Panc1 (cell line): ENCODE measurements at regions of chr12 and their contacts with region 1.

Region 1: DNA sequence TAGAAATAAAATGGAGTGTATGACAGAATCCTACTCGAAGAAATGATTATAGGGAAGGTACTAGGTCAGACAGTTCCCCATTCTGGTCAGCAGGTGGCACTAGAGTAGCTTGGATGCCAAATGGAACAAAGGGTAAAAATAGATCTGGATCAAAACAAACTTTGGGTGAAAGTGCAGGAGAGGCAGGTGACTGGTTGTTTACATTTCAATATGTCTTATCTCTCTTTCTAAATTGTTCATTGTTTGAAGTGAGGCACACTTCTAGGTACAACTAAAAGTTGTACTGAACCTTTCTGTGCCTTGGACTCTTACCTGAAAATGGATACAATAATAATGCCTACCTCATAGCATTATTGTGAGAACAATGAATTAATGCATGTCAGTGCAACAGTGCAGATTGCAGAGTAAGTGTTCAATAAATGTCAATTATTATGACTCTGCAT is 62.0 kb upstream of the OSBPL8 start:
- DNase-seq: no peak
- ATAC-seq: peak; percentile 88
- H3K4me3 ChIP-seq: no peak overlapping the region
- H3K27ac ChIP-seq: no peak overlapping the region
- H3K4me1 ChIP-seq: no peaks in the 10 kb centered on the region
- H3K27me3 ChIP-seq: 0 out of 2 replicates have a peak, but pooled peaks cover 3% of the 10 kb centered on the region
- CTCF ChIP-seq: peak; percentile 81; the same call in 1 of the 2 replicates

Region 2: GRCh38 chr12:76790564-76791552 is 169.3 kb after region 1 on chr12:
- CTCF ChIA-PET with region 1: interaction called, 5 read pairs
- POLR2A ChIA-PET with region 1: no interaction called
- in situ Hi-C with region 1: no loop called
- intact Hi-C with region 1: loop called (anchors 1 kb)
- DNase-seq: no peak
- ATAC-seq: peak; percentile 45; the same call in 1 of the 2 replicates
- H3K4me3 ChIP-seq: no peak overlapping the region
- H3K27ac ChIP-seq: no peak overlapping the region
- H3K4me1 ChIP-seq: 0 out of 2 replicates have a peak, but pooled peaks cover 5% of the 10 kb centered on the region
- H3K27me3 ChIP-seq: no peaks in the 10 kb centered on the region
- CTCF ChIP-seq: peak; percentile 51; the same call in 1 of the 2 replicates

Region 3: DNA sequence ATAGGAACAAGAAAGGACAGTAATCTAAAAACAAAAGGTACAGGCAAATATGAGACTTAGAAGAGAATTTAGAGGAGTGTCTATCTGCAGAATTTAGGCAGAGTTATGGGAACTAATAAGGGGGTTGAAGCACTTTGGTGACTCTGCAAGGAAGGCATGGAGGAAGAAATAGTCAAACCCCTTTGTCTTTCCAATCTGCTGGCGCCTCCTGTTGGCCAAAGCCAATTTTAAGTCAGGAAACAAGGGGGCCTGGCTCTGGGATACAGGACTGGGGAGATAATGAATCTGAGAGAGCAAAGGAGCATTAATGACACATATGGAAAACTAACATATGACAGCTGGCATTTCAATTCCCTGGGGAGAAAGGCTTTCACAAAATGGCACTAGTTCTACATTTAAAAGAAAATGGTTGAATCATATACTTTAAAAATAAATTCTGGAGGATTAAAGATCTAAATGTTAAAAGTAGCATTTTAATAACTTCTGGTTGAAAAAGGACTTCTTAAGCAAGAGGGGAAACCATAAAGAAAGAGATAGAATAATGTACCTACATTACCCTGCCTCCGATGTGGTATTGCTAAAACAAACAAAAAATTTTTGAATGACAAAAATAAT is 305.7 kb after region 1 on chr12:
- CTCF ChIA-PET with region 1: no interaction called
- POLR2A ChIA-PET with region 1: no interaction called
- in situ Hi-C with region 1: no loop called
- intact Hi-C with region 1: loop called (anchors 5 kb)
- DNase-seq: no peak
- ATAC-seq: peak; percentile 53; the same call in 1 of the 2 replicates
- H3K4me3 ChIP-seq: no peak overlapping the region
- H3K27ac ChIP-seq: no peak overlapping the region
- H3K4me1 ChIP-seq: no peaks in the 10 kb centered on the region
- H3K27me3 ChIP-seq: peaks cover 9% of the 10 kb centered on the region; the same call in 1 of the 2 replicates
- CTCF ChIP-seq: peak; percentile 78

Region 4: GRCh38 chr12:77010691-77011548 is 389.3 kb after region 1 on chr12:
- CTCF ChIA-PET with region 1: interaction called, 7 read pairs
- POLR2A ChIA-PET with region 1: no interaction called
- in situ Hi-C with region 1: no loop called
- intact Hi-C with region 1: loop called (anchors 1 kb)
- DNase-seq: peak; percentile 52
- ATAC-seq: peak; percentile 94
- H3K4me3 ChIP-seq: no peak overlapping the region
- H3K27ac ChIP-seq: no peak overlapping the region
- H3K4me1 ChIP-seq: 0 out of 2 replicates have a peak, but pooled peaks cover 4% of the 10 kb centered on the region
- H3K27me3 ChIP-seq: peaks cover 3% of the 10 kb centered on the region; the same call in 1 of the 2 replicates
- CTCF ChIP-seq: peak; percentile 98